Activated CD8-positive, alpha-beta T cell treated with anti-CD3 and anti-CD28 coated beads for 36 hours (primary cell): ENCODE measurements at regions of chr1 and their contacts with region 1.

Region 1: DNA sequence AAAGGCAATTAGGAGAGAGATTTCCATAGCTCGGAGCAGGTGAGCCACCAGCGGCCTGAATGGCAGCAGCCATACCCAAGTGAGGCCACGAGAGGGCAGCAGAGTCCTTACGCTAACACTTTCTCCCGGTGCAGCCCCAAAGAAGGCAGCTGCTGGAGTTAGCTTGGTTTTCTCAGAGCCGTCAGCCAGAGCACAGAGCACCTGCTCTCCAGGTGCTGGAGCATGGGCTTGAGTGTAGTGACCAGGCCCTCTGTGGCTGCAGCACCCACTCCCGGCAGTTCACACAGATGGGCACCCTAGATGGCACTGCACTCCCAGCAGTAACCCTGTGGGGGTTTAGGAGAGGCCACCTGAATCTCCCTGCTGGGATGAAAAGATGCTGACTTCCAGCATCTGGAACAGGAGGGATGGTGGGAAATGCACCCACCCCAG is 45.8 kb downstream of the TMCC2 start:
- DNase-seq: peak; percentile 92
- ATAC-seq: peak; percentile 94
- H3K4me3 Mint-ChIP-seq: no peak overlapping the region
- H3K27ac Mint-ChIP-seq: no peak overlapping the region
- H3K4me1 Mint-ChIP-seq: peaks cover 33% of the 10 kb centered on the region
- H3K27me3 Mint-ChIP-seq: no peaks in the 10 kb centered on the region
- CTCF ChIP-seq: peak; percentile 99

Region 2: GRCh38 chr1:205284343-205285144 is 11.0 kb after region 1 on chr1:
- CTCF ChIA-PET with region 1: interaction called, 128 read pairs
- POLR2A ChIA-PET with region 1: interaction called, 13 read pairs
- intact Hi-C with region 1: no loop called
- DNase-seq: peak; percentile 96
- ATAC-seq: peak; percentile 75
- H3K4me3 Mint-ChIP-seq: peak overlapping the region; percentile 57
- H3K27ac Mint-ChIP-seq: peak overlapping the region; percentile 66
- H3K4me1 Mint-ChIP-seq: peaks cover 74% of the 10 kb centered on the region
- H3K27me3 Mint-ChIP-seq: no peaks in the 10 kb centered on the region
- CTCF ChIP-seq: no peak

Region 3: GRCh38 chr1:205300886-205301821 is 27.6 kb after region 1 on chr1:
- CTCF ChIA-PET with region 1: interaction called, 19 read pairs
- POLR2A ChIA-PET with region 1: interaction called, 3 read pairs
- intact Hi-C with region 1: no loop called
- DNase-seq: no peak
- ATAC-seq: no peak
- H3K4me3 Mint-ChIP-seq: no peak overlapping the region
- H3K27ac Mint-ChIP-seq: no peak overlapping the region
- H3K4me1 Mint-ChIP-seq: peaks cover 40% of the 10 kb centered on the region
- H3K27me3 Mint-ChIP-seq: no peaks in the 10 kb centered on the region
- CTCF ChIP-seq: no peak

Region 4: GRCh38 chr1:205321164-205321958 is 47.8 kb after region 1 on chr1 and contains the start of gene NUAK2:
- CTCF ChIA-PET with region 1: interaction called, 1,285 read pairs
- POLR2A ChIA-PET with region 1: interaction called, 10 read pairs
- intact Hi-C with region 1: loop called (anchors 1 kb)
- DNase-seq: peak; percentile 85
- ATAC-seq: peak; percentile 76
- H3K4me3 Mint-ChIP-seq: peak within 1 kb of the TSS; percentile 78
- H3K27ac Mint-ChIP-seq: peak within 1 kb of the TSS; percentile 82
- H3K4me1 Mint-ChIP-seq: peaks cover 56% of the 10 kb centered on the region
- H3K27me3 Mint-ChIP-seq: no peaks in the 10 kb centered on the region
- CTCF ChIP-seq: peak; percentile 34
- total RNA-seq, gene NUAK2: 1.9 TPM

Region 5: DNA sequence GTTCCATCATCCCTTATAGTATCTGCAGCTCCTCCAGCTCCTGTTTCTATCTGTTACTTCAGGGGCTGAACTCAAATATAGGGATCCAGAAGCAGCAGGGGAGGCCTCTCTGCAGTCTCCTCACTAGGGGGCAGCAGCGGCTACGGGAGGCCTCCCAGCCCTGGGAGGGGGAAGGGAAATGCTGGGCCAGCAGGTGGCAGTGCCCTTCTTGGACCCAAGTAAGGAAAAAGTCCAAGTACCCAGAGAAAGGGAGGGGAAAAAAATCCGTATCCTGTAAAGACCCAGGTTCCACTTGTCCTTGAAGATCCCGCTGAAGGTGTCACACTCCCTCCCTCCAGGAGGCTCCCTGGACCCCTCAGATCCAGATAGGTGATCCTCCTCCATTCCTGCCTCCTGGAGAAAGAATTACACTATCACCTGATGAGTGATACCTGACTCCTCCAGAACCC is 62.1 kb after region 1 on chr1:
- CTCF ChIA-PET with region 1: interaction called, 1,285 read pairs
- POLR2A ChIA-PET with region 1: interaction called, 3 read pairs
- intact Hi-C with region 1: no loop called
- DNase-seq: peak; percentile 84
- ATAC-seq: peak; percentile 92
- H3K4me3 Mint-ChIP-seq: no peak overlapping the region
- H3K27ac Mint-ChIP-seq: no peak overlapping the region
- H3K4me1 Mint-ChIP-seq: peaks cover 6% of the 10 kb centered on the region
- H3K27me3 Mint-ChIP-seq: peaks cover 6% of the 10 kb centered on the region
- CTCF ChIP-seq: peak; percentile 98

Region 6: DNA sequence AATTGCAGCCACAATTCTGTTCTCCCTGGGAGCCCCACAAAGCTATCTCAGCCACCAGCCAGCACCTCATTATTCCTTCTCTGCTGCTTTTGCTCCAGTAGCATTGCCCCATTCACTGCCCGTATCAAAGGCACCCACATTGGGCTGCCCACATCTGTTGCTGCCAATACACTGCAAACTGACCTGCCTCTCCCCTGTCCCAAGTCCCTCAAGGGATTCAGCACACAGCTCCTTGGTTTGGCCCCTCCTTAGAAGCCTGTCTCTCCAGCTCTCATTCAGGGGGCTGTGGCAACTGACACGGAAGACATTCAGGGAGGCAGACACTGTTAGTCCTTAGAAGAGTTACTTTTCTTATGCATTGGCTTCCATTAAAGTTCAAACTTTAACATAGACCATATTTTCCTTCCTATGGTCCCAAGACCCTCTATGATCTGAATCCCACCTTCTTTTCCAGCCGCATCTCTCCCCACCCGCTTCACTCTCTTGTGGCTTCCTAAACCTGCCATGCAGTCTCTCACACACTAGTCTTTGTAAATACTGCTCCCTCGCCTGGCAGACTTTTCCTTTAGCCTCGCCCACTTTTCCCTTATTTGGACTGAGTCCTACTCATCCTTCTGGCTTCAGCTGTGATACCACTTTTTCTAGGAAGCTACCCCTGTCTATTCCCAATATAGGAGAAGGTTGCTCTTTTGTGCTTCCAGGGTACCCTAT is 102.4 kb after region 1 on chr1:
- CTCF ChIA-PET with region 1: no interaction called
- POLR2A ChIA-PET with region 1: no interaction called
- intact Hi-C with region 1: no loop called
- DNase-seq: no peak
- ATAC-seq: no peak
- H3K4me3 Mint-ChIP-seq: no peak overlapping the region
- H3K27ac Mint-ChIP-seq: no peak overlapping the region
- H3K4me1 Mint-ChIP-seq: peaks cover 11% of the 10 kb centered on the region
- H3K27me3 Mint-ChIP-seq: peaks cover 18% of the 10 kb centered on the region
- CTCF ChIP-seq: no peak